OCI-LY7 (cell line): ENCODE measurements at regions of chr1 and their contacts with region 1.

Region 1: GRCh38 chr1:54406339-54407153 is at the start of gene SSBP3:
- DNase-seq: peak; percentile 93
- H3K4me3 ChIP-seq: peak within 1 kb of the TSS; percentile 91
- H3K27ac ChIP-seq: peak within 1 kb of the TSS; percentile 87
- H3K4me1 ChIP-seq: peaks cover 51% of the 10 kb centered on the region
- CTCF ChIP-seq: peak; percentile 43
- total RNA-seq, gene SSBP3: 11.2 and 16.5 TPM in 2 replicates

Region 2: GRCh38 chr1:54199765-54200518 is 206.6 kb before region 1 on chr1 and contains the starts of genes CYB5RL and MRPL37:
- CTCF ChIA-PET with region 1: no interaction called
- POLR2A ChIA-PET with region 1: no interaction called
- intact Hi-C with region 1: loop called (anchors 5 kb)
- DNase-seq: peak; percentile 97
- H3K4me3 ChIP-seq: peak within 1 kb of the TSS; percentile 87
- H3K27ac ChIP-seq: peak within 1 kb of the TSS; percentile 41
- H3K4me1 ChIP-seq: peaks cover 28% of the 10 kb centered on the region
- CTCF ChIP-seq: no peak
- total RNA-seq, gene CYB5RL: 10.1 and 10.4 TPM in 2 replicates
- total RNA-seq, gene MRPL37: 85.6 and 107 TPM in 2 replicates

Region 3: DNA sequence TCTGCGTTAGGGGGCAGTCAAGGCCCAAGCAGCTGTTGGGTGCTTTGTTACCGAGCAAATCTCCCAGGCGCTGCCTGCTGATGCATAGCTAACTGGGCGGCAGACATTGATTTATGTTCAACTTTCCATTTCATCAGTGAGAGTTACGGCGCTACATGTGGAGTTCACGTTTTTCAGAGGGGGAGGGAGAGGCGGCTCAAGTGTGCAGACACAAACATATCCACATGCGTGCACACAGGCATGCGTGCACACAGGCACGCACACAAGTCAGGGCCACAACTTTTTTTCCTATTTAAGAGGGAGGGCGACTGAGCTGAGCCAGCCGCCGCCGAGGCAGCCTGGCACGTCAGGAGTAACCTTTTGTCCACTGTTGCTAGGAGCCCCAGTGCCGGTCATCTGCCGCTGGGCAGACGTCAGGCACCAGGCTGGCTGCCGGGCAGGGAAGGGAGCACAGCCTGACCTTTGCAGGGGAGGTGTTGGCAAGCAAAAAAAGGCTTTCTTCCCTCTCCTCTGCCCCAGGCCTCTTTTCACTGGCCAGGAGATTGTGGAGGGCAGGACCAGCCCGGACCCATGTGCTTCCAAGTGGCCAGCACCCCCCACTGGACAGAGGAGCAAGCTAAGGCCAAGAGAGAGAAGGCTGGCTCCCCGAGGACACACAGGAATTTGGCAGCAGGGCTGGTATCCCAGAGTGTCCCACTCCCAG is 133.3 kb before region 1 on chr1:
- CTCF ChIA-PET with region 1: interaction called, 4 read pairs
- POLR2A ChIA-PET with region 1: interaction called, 3 read pairs
- intact Hi-C with region 1: loop called (anchors 1 kb)
- DNase-seq: peak; percentile 96
- H3K4me3 ChIP-seq: peak overlapping the region; percentile 35
- H3K27ac ChIP-seq: peak overlapping the region; percentile 18
- H3K4me1 ChIP-seq: peaks cover 17% of the 10 kb centered on the region
- CTCF ChIP-seq: peak; percentile 83; the same call in 1 of the 2 replicates

Region 4: DNA sequence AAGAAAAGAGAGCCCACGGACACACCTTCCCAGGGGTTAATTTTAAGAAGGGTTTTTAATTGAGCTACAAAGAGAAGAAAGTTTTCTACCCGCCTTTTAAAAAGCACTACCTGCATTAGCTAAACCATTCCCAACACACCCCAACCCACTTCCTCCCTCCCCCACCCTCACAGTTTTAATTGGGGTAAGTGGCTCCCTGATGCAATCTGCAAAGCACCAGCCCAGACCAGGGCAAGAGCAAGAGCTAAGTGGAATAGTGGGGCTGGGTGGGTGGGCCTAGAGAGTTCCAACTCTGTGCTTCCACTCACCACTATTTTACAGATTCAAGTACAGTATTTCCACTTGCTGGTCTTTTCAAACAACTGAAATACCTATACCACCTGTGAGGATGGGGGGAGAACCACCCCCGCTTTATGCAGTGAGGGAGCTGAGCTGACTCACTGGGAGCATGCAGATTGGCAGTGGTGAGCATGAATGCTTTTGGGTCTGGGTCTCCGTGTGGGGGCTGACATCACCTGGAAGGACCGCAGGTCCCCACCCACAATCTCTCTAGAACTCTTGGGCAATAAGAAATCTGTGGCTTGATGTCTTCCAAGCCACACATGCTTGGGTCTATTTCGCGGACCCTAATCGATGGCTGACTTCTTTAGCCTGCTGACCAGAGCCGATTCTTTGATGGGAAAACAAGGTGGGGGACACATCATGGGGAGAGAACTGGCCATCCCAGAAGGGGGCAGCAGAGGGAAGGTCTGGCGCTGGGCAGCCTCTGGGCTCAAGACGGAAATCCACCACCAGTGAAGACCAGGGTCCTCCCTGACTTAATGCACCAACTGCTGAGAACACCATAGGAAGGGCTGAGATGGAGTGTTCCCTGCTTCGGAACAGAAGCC is 95.9 kb before region 1 on chr1:
- CTCF ChIA-PET with region 1: interaction called, 5 read pairs
- POLR2A ChIA-PET with region 1: interaction called, 3 read pairs
- intact Hi-C with region 1: loop called (anchors 2 kb)
- DNase-seq: peak; percentile 41
- H3K4me3 ChIP-seq: no peak overlapping the region
- H3K27ac ChIP-seq: no peak overlapping the region
- H3K4me1 ChIP-seq: peaks cover 7% of the 10 kb centered on the region
- CTCF ChIP-seq: peak; percentile 75

Region 5: DNA sequence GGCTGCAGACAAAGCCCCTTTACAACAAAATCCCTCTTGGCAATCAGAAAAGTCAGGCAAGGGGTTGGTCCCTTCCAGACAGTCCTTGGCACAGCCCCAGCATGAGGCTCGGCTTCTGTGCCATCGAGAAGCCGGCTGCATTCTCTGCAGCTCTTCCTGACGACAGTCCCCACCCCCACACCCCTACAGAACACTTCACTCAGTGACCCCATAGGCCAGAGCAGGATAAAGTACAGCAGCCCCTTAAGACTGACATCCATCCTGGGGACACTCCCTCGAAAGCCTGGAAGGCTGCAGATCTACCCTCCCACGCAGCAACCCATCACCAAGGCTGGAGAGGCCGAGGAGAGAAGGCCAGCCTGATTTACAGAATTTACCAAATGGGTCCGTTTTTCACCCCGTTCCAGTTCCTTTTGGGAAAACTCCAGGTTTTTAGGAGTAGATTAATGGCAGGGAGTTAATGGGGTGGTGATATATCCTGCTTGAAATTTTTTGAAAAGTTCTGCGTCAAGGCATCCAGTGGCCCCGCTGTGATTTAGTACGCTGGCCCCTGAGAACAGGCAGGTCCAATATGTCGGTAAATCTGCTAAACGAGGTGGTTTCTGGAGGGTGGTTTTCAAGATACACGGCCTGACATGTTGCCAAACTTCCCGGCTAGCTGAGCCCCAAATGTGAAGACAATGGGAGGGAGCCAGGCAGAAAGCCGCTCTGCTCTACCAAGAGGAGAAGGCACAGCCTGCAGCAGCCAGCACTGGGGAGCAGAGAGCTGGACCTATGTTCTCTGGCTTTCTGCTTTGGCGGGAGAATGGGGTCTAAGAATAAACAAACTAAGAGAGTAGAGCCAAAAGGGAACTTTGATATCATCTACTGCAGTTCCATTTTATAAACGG is 82.0 kb before region 1 on chr1:
- CTCF ChIA-PET with region 1: no interaction called
- POLR2A ChIA-PET with region 1: no interaction called
- intact Hi-C with region 1: loop called (anchors 5 kb)
- DNase-seq: no peak
- H3K4me3 ChIP-seq: no peak overlapping the region
- H3K27ac ChIP-seq: no peak overlapping the region
- H3K4me1 ChIP-seq: peaks cover 30% of the 10 kb centered on the region
- CTCF ChIP-seq: no peak

Region 6: GRCh38 chr1:54376430-54377039 is 30.0 kb before region 1 on chr1:
- CTCF ChIA-PET with region 1: no interaction called
- POLR2A ChIA-PET with region 1: interaction called, 8 read pairs
- intact Hi-C with region 1: loop called (anchors 1 kb)
- DNase-seq: peak; percentile 72
- H3K4me3 ChIP-seq: peak overlapping the region; percentile 57
- H3K27ac ChIP-seq: peak overlapping the region; percentile 95
- H3K4me1 ChIP-seq: peaks cover 83% of the 10 kb centered on the region
- CTCF ChIP-seq: no peak

Region 7: DNA sequence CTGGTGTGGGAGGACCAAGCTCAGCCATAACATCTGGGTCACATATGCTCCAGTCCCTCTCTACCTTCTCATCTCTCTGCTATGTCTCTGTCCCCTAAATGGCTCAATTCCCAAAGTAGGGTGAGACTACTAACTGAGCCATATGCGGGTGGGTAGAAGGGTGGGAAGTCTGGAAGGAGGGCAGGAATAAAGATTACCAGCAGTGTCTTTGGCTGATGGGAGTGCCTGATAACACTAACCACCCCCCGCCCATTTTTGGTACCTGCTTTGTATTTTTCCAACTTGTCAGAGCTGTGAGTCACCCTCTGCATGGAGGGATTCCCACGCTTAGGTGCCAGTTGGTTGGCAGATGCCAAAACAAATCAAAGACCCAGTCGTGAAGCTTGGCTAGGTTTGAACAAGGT is 14.6 kb after region 1 on chr1:
- CTCF ChIA-PET with region 1: no interaction called
- POLR2A ChIA-PET with region 1: no interaction called
- intact Hi-C with region 1: no loop called
- DNase-seq: no peak
- H3K4me3 ChIP-seq: no peak overlapping the region
- H3K27ac ChIP-seq: no peak overlapping the region
- H3K4me1 ChIP-seq: no peaks in the 10 kb centered on the region
- CTCF ChIP-seq: no peak